GM23248 (cell line): ENCODE measurements at regions of chr2 and their contacts with region 1.

Region 1: DNA sequence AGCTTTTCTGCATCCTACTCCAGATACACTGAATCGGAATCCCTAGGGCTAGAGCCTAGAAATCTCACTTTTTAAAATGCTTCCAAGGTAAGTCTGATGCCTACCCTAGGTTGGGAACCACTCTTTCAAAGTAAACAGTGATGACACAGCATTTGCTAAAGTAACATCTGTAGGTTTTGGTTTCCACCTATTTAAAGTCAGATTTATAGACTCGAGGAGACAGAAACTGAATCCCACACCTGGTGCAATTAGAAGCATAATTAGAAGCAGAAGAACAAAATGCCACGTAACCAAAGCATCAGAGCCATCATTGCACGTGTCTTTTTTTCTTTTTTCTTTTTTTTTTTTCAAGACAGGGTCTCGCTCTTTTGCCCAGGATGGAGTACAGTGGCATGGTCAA is 40.9 kb downstream of the PDK1 start:
- DNase-seq: no peak
- H3K4me3 ChIP-seq: no peak overlapping the region
- H3K27ac ChIP-seq: no peak overlapping the region
- H3K4me1 ChIP-seq: peaks cover 14% of the 10 kb centered on the region; the same call in 1 of the 2 replicates
- H3K27me3 ChIP-seq: no peaks in the 10 kb centered on the region

Region 2: DNA sequence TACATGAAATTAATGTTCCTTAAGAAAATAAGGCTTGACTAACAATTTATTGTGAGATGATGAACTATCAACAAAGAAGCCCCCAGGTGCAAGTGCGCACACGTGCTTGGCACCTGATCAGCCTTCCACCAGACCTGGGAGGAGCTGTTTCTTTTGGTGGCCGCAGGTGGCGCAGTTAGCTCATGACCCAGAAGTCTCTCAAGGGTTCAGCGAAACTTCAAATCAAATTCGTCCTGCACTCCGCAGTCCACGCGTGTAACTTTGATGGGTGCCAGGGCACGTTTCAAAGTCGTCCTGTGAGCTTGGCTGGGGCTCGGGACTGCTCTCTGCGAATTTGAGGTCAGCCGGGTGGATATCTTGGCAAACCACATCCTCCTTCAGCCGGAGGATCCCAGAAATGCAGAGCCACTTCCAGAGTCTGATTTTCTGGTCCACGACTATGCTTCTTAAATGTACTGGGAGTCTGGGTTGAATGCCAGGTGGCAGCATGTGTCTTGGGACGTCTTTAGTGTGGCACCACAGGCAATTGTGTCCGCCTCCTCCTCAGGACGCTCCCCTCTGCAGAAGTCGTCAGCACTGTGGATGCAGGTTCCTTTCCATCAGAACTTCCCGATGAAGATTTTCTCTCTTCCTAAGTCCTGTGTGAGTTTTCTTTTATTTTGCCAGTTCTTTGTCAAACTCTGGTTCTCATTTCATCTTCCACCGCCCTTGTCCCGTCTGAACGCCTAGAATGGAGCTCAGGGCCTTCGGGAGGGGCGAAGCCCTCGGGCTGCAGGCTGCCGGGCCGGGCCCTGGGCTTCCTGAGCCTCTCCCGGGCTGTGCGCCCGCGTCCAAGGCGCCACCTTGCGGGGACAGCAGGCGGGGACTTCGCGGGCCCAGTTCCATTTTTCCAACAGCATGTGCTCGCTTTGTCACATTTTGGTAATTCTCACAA is 77.5 kb after region 1 on chr2:
- in situ Hi-C with region 1: loop called (anchors 10 kb)
- DNase-seq: peak; percentile 80
- H3K4me3 ChIP-seq: no peak overlapping the region
- H3K27ac ChIP-seq: no peak overlapping the region
- H3K4me1 ChIP-seq: peaks cover 14% of the 10 kb centered on the region
- H3K27me3 ChIP-seq: no peaks in the 10 kb centered on the region